Activated CD4-positive, alpha-beta memory T cell treated with anti-CD3 and anti-CD28 coated beads for 36 hours (primary cell): ENCODE measurements at regions of chr2 and their contacts with region 1.

Region 1: GRCh38 chr2:231674587-231675338 is 33.6 kb upstream of the PTMA start:
- DNase-seq: peak; percentile 74
- H3K4me3 Mint-ChIP-seq: no peak overlapping the region
- H3K27ac Mint-ChIP-seq: no peak overlapping the region
- H3K4me1 Mint-ChIP-seq: peaks cover 9% of the 10 kb centered on the region
- H3K27me3 Mint-ChIP-seq: no peaks in the 10 kb centered on the region

Region 2: DNA sequence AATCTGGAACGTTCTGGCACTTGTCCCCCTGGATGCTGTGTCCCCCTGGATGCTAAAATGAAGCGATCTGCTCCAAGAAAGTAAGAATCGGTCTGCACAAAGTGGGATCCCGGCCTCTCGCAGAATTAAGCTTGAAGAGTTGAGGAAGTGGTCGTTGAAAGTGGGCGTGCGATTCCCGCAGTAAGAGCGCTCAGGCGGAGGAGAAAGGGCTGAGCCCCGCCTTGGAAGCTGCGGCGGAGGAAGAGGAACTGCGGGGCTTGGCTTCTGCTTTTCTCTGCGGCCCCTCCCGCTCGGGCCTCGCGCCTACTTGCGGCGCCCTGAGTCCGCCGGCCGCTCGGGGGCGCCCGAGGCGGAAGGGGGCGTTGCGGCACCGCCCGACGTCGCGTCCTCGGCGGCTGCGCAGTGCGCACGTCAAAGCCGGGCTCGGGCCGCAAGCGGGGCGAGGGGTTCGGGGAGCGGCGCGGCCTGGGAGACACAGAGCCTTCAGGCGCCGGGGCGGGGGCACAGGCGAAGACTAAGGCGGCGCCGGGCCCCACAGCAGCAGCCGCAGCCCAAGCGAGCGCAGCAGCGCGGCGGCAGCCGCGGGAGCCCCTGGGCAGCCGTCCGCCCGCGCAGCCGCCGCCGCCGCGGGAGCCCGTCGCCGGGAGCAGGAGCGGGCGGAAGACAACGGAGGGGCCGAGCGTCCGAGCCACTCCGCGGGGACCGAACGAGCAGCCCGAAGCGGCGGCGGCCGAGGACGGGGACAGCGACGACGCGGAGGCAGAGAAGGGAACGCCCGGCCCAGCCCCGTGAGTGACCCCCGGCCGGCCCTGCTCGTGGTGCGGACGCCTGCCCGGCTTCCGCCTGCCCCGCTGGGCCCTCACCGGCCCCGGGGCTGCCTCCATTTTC is 962.1 kb before region 1 on chr2 and contains the start of gene CAB39:
- CTCF ChIA-PET with region 1: no interaction called
- POLR2A ChIA-PET with region 1: no interaction called
- intact Hi-C with region 1: no loop called
- DNase-seq: peak; percentile 91
- H3K4me3 Mint-ChIP-seq: peak within 1 kb of the TSS; percentile 93
- H3K27ac Mint-ChIP-seq: peak within 1 kb of the TSS; percentile 91
- H3K4me1 Mint-ChIP-seq: peaks cover 41% of the 10 kb centered on the region
- H3K27me3 Mint-ChIP-seq: no peaks in the 10 kb centered on the region
- total RNA-seq, gene CAB39: 128 to 129 TPM

Region 3: DNA sequence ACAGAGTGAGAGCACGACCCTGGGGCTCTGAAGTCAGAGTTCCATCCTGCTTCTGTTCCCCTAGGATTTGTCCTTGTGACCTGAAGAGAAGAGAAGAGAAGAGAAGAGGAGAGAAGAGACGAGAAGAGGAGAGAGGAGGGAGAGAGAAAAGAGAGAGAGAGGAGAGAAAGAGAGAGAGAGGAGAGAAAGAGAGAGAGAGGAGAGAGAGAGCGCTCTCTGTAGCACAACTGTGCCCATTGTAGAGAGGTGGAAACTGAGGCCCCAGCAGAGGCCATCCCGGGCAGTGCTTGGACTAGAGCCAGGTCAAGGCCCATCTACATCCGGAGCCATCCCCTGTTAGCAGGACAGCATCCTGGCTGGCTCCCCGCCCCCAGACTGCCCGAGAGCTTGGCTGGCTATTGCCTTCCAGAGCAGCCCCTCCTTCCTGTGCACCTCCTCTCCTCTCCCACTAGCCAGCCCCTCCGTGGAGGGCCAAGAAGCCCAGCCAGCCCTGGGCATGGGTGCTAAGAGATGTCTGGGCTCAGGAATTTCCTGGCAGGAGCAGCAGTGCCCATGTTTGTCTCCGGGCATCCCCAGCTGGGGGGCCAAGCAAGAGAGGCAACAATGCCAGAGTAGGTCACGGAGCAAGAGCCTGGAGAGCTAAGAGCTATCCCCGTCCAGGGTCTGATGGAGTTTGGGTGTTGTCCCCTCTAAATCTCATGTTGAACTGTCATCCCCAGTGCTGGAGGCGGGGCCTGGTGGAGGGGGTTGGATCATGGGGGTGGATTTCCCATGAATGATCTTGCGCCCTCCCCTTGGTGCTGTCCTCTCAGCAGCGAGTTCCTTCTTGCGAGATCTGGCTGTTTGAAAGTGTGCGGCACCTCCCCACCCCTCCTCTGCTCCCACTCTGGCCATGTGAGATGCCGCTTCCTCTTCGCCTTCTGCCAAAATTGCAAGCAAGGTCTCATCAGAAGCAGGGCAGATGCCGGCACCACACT is 731.6 kb before region 1 on chr2:
- CTCF ChIA-PET with region 1: no interaction called
- POLR2A ChIA-PET with region 1: no interaction called
- intact Hi-C with region 1: no loop called
- DNase-seq: peak; percentile 73
- H3K4me3 Mint-ChIP-seq: peak overlapping the region; percentile 54
- H3K27ac Mint-ChIP-seq: peak overlapping the region; percentile 76
- H3K4me1 Mint-ChIP-seq: peaks cover 32% of the 10 kb centered on the region
- H3K27me3 Mint-ChIP-seq: peaks cover 22% of the 10 kb centered on the region

Region 4: DNA sequence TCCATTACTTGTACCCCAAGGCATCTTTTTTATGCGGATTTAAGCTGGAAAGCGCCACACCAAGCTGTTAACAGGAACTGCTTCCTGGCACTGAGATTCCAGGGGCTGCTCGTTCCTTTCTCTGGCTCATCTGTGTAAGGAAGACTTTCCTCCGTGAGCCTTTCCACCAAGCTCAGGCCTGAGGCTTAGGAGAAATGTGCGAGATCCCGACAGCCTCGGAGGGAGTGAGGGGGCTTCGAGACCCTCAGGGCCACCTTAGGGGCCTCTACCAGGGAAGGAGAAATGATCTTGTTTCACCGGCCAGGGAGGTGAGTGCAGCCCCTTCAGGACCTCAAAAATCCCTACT is 262.2 kb before region 1 on chr2:
- CTCF ChIA-PET with region 1: no interaction called
- POLR2A ChIA-PET with region 1: no interaction called
- intact Hi-C with region 1: no loop called
- DNase-seq: no peak
- H3K4me3 Mint-ChIP-seq: no peak overlapping the region
- H3K27ac Mint-ChIP-seq: no peak overlapping the region
- H3K4me1 Mint-ChIP-seq: peaks cover 7% of the 10 kb centered on the region
- H3K27me3 Mint-ChIP-seq: peaks cover 36% of the 10 kb centered on the region

Region 5: DNA sequence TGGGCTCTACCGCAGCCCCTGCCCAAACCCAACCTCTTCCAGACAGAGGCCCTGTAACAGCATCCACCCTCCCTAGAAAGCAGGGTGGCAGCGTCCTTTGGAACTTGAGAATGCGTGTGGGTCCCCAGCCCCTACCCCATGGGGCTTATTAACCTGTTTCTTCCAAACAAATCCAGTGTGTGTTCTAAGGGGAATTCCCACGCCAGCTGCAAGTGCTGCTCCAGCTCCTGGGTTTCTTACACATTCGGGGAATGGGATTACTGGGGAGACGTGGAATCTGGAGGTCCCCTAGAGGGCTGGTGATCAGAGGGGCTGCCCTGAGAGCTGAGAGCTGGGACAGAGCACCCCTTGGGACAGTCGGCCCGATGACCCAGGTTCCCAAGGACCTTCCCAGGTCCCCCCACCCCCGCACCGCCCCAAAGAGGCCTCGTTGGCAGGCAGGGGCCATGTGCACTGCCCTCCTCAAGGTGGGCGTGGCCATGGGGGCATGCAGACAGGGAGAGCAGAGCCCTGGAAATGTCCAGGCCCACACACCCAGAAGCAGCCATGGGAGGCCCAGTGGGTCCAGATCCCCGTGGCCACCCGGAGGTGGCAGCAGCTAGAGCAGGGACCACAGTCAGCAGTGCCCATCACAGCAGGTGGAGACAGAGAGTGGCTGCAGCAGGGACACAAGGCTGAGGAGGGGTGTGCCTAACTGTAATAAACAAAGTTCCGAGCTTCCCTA is 100.9 kb before region 1 on chr2:
- CTCF ChIA-PET with region 1: no interaction called
- POLR2A ChIA-PET with region 1: no interaction called
- intact Hi-C with region 1: no loop called
- DNase-seq: no peak
- H3K4me3 Mint-ChIP-seq: no peak overlapping the region
- H3K27ac Mint-ChIP-seq: no peak overlapping the region
- H3K4me1 Mint-ChIP-seq: peaks cover 2% of the 10 kb centered on the region
- H3K27me3 Mint-ChIP-seq: peaks cover 2% of the 10 kb centered on the region

Region 6: GRCh38 chr2:231612179-231613053 is 62.3 kb before region 1 on chr2:
- CTCF ChIA-PET with region 1: interaction called, 210 read pairs
- POLR2A ChIA-PET with region 1: interaction called, 44 read pairs
- intact Hi-C with region 1: loop called (anchors 1 kb)
- DNase-seq: peak; percentile 99
- H3K4me3 Mint-ChIP-seq: peak overlapping the region; percentile 74
- H3K27ac Mint-ChIP-seq: peak overlapping the region; percentile 97
- H3K4me1 Mint-ChIP-seq: peaks cover 44% of the 10 kb centered on the region
- H3K27me3 Mint-ChIP-seq: no peaks in the 10 kb centered on the region

Region 7: GRCh38 chr2:231648587-231649174 is 26.1 kb before region 1 on chr2:
- CTCF ChIA-PET with region 1: interaction called, 35 read pairs
- POLR2A ChIA-PET with region 1: no interaction called
- intact Hi-C with region 1: loop called (anchors 1 kb)
- DNase-seq: peak; percentile 77
- H3K4me3 Mint-ChIP-seq: no peak overlapping the region
- H3K27ac Mint-ChIP-seq: no peak overlapping the region
- H3K4me1 Mint-ChIP-seq: no peaks in the 10 kb centered on the region
- H3K27me3 Mint-ChIP-seq: no peaks in the 10 kb centered on the region

Region 8: DNA sequence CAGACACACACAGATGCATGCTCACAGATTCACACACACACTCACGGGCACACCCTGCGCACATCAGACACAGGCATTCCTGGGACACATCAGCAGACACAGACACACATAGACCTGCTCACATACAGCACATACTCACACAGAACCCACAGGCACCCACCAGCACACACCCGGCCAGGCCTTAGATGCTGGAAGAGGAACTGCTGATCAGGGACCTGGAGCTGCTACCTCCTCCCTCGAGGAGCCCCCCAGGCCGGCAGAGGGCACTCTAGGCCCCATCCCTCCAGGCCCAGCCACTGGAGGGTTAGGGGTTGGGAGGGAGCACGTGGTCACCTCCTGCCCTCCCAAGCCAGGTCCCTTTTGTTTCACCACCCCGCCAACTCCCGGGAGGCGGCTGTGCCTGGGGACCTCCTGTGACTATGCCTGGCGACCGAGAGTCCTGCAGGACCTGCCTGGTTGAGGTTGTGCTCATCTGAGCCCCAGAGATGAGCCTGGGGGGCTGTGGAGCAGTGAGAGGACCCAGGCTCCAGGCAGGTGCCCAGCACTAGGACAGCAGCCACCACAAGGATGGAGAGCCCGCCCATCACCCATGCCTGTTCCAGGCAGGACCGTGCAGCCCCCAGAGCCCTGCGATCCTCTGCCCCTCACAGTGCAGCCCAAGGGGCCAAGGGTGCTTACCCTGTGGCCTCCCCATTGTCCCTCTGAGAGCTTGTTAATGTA is 12.5 kb after region 1 on chr2:
- CTCF ChIA-PET with region 1: interaction called, 18 read pairs
- POLR2A ChIA-PET with region 1: no interaction called
- intact Hi-C with region 1: no loop called
- DNase-seq: peak; percentile 73
- H3K4me3 Mint-ChIP-seq: no peak overlapping the region
- H3K27ac Mint-ChIP-seq: no peak overlapping the region
- H3K4me1 Mint-ChIP-seq: peaks cover 4% of the 10 kb centered on the region
- H3K27me3 Mint-ChIP-seq: peaks cover 5% of the 10 kb centered on the region

Region 9: GRCh38 chr2:231701456-231702373 is 27.0 kb after region 1 on chr2:
- CTCF ChIA-PET with region 1: interaction called, 35 read pairs
- POLR2A ChIA-PET with region 1: interaction called, 4 read pairs
- intact Hi-C with region 1: no loop called
- DNase-seq: no peak
- H3K4me3 Mint-ChIP-seq: no peak overlapping the region
- H3K27ac Mint-ChIP-seq: no peak overlapping the region
- H3K4me1 Mint-ChIP-seq: peaks cover 14% of the 10 kb centered on the region
- H3K27me3 Mint-ChIP-seq: no peaks in the 10 kb centered on the region

Region 10: DNA sequence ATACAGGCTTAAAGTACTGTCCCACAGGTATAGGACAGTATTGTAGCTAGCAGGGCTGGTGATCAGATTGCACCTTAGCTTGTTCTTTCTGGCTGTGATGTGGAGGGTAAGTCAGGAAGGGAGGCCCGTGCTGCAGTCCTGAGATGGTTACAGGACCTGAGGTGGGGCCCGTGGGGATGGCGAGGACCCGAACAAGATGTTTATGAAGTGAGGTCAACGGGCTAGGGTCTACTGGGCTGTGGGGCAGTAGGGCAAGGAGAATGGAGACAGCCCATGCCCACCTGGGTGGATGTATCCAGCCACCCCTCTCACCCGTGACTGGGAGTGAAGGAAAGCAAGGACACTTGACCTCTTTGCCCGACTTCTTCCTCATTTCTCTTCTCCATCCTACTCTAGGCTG is 51.5 kb after region 1 on chr2:
- CTCF ChIA-PET with region 1: interaction called, 578 read pairs
- POLR2A ChIA-PET with region 1: no interaction called
- intact Hi-C with region 1: no loop called
- DNase-seq: no peak
- H3K4me3 Mint-ChIP-seq: no peak overlapping the region
- H3K27ac Mint-ChIP-seq: no peak overlapping the region
- H3K4me1 Mint-ChIP-seq: no peaks in the 10 kb centered on the region
- H3K27me3 Mint-ChIP-seq: no peaks in the 10 kb centered on the region

Region 11: GRCh38 chr2:231786177-231786916 is 111.6 kb after region 1 on chr2 and contains the start of gene COPS7B:
- CTCF ChIA-PET with region 1: interaction called, 11 read pairs
- POLR2A ChIA-PET with region 1: no interaction called
- intact Hi-C with region 1: loop called (anchors 5 kb)
- DNase-seq: peak; percentile 91
- H3K4me3 Mint-ChIP-seq: peak within 1 kb of the TSS; percentile 79
- H3K27ac Mint-ChIP-seq: peak within 1 kb of the TSS; percentile 88
- H3K4me1 Mint-ChIP-seq: peaks cover 67% of the 10 kb centered on the region
- H3K27me3 Mint-ChIP-seq: no peaks in the 10 kb centered on the region
- total RNA-seq, gene COPS7B: 47.1 to 50.6 TPM